ENCODE measurements at regions of chrX and their contacts with region 1.

Region 1: GRCh38 chrX:153507484-153508178 is 9.8 kb upstream of the ATP2B3 start:
- DNase-seq: peak; percentile 67 to 83 (median 77)
- ATAC-seq: peak; percentile 99
- H3K4me3 ChIP-seq: no peak overlapping the region
- H3K4me3 Mint-ChIP-seq: peak overlapping the region in 2 of 10 donors; percentile 9 to 13
- H3K27ac ChIP-seq: no peak overlapping the region
- H3K27ac Mint-ChIP-seq: peak overlapping the region in 2 of 9 donors; percentile 32 to 46
- H3K4me1 ChIP-seq: peaks cover 0 to 4% of the 10 kb centered on the region in 2 donors
- H3K4me1 Mint-ChIP-seq: peaks cover 0 to 6% (median 0%) of the 10 kb centered on the region in 7 donors
- H3K27me3 ChIP-seq: no peaks in the 10 kb centered on the region
- H3K27me3 Mint-ChIP-seq: no peaks in the 10 kb centered on the region

Region 2: DNA sequence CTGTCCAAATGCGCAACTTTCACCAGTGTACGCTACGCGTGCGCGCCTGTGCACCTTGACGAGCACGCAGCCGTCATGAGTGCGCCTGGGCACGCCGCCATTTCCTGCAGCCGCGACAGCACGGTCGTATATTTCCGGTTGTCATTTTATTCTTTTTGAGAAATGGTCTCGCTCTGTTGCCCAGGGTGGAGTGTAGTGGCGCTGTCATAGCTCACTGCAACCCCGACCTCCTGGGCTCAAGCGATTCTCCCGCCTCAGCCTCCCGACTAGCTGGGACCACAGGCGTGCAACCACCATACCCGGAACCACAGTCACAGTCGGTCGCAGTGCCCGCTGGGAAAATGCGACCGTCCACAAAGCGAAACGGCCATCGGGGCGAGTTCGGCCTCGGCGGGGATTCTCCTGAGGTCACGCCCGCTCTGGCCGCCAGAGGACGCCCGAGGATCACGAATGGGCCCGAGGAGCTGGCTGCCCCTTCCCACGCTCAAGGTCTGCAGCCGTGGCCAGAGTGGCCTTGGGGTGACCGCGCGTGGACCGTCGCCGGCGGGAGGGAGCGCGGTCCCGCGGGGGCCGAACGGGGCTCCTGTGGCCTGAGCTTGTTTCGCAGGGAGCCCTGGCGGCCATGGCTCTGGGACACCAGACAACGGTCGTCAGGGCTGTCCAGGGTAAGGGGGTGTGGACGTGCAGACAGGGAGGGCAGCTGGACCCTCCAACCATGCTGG is 475.1 kb before region 1 on chrX:
- CTCF ChIA-PET with region 1: interaction called, 9 read pairs
- POLR2A ChIA-PET with region 1: interaction called, 3 read pairs
- intact Hi-C with region 1: loop called (anchors 1 kb)
- DNase-seq: peak; percentile 32 to 75 (median 53)
- ATAC-seq: peak; percentile 87
- H3K4me3 ChIP-seq: peak overlapping the region; percentile 69
- H3K4me3 Mint-ChIP-seq: peak overlapping the region; percentile 78 to 90 (median 86)
- H3K27ac ChIP-seq: peak overlapping the region; percentile 53
- H3K27ac Mint-ChIP-seq: peak overlapping the region; percentile 68 to 93 (median 87)
- H3K4me1 ChIP-seq: peaks cover 7 to 9% of the 10 kb centered on the region in 2 donors
- H3K4me1 Mint-ChIP-seq: peaks cover 0 to 11% (median 4%) of the 10 kb centered on the region in 7 donors
- H3K27me3 ChIP-seq: no peaks in the 10 kb centered on the region
- H3K27me3 Mint-ChIP-seq: no peaks in the 10 kb centered on the region

Region 3: GRCh38 chrX:153370293-153371055 is 137.2 kb before region 1 on chrX:
- CTCF ChIA-PET with region 1: no interaction called
- POLR2A ChIA-PET with region 1: no interaction called
- intact Hi-C with region 1: no loop called
- DNase-seq: no peak
- ATAC-seq: no peak
- H3K4me3 ChIP-seq: no peak overlapping the region
- H3K4me3 Mint-ChIP-seq: no peak overlapping the region
- H3K27ac ChIP-seq: no peak overlapping the region
- H3K27ac Mint-ChIP-seq: no peak overlapping the region
- H3K4me1 ChIP-seq: no peaks in the 10 kb centered on the region
- H3K4me1 Mint-ChIP-seq: peaks cover 0 to 7% (median 0%) of the 10 kb centered on the region in 7 donors
- H3K27me3 ChIP-seq: no peaks in the 10 kb centered on the region
- H3K27me3 Mint-ChIP-seq: no peaks in the 10 kb centered on the region

Region 4: GRCh38 chrX:153460845-153461244 is 46.8 kb before region 1 on chrX:
- CTCF ChIA-PET with region 1: interaction called, 9 read pairs
- POLR2A ChIA-PET with region 1: no interaction called
- intact Hi-C with region 1: loop called (anchors 1 kb)
- DNase-seq: peak; percentile 19 to 53 (median 35)
- ATAC-seq: peak; percentile 74
- H3K4me3 ChIP-seq: no peak overlapping the region
- H3K4me3 Mint-ChIP-seq: no peak overlapping the region
- H3K27ac ChIP-seq: no peak overlapping the region
- H3K27ac Mint-ChIP-seq: peak overlapping the region in 1 of 9 donors; percentile 46
- H3K4me1 ChIP-seq: no peaks in the 10 kb centered on the region
- H3K4me1 Mint-ChIP-seq: peaks cover 0 to 3% (median 0%) of the 10 kb centered on the region in 7 donors
- H3K27me3 ChIP-seq: no peaks in the 10 kb centered on the region
- H3K27me3 Mint-ChIP-seq: no peaks in the 10 kb centered on the region

Region 5: GRCh38 chrX:153476647-153477362 is 30.8 kb before region 1 on chrX:
- CTCF ChIA-PET with region 1: interaction called, 11 read pairs
- POLR2A ChIA-PET with region 1: no interaction called
- intact Hi-C with region 1: no loop called
- DNase-seq: no peak
- ATAC-seq: no peak
- H3K4me3 ChIP-seq: no peak overlapping the region
- H3K4me3 Mint-ChIP-seq: no peak overlapping the region
- H3K27ac ChIP-seq: no peak overlapping the region
- H3K27ac Mint-ChIP-seq: no peak overlapping the region
- H3K4me1 ChIP-seq: peaks cover 3 to 11% of the 10 kb centered on the region in 2 donors
- H3K4me1 Mint-ChIP-seq: peaks cover 0 to 18% (median 5%) of the 10 kb centered on the region in 7 donors
- H3K27me3 ChIP-seq: no peaks in the 10 kb centered on the region
- H3K27me3 Mint-ChIP-seq: peaks cover 0 to 5% (median 0%) of the 10 kb centered on the region in 5 donors